ENCODE measurements at regions of chr2 and their contacts with region 1.

Region 1: DNA sequence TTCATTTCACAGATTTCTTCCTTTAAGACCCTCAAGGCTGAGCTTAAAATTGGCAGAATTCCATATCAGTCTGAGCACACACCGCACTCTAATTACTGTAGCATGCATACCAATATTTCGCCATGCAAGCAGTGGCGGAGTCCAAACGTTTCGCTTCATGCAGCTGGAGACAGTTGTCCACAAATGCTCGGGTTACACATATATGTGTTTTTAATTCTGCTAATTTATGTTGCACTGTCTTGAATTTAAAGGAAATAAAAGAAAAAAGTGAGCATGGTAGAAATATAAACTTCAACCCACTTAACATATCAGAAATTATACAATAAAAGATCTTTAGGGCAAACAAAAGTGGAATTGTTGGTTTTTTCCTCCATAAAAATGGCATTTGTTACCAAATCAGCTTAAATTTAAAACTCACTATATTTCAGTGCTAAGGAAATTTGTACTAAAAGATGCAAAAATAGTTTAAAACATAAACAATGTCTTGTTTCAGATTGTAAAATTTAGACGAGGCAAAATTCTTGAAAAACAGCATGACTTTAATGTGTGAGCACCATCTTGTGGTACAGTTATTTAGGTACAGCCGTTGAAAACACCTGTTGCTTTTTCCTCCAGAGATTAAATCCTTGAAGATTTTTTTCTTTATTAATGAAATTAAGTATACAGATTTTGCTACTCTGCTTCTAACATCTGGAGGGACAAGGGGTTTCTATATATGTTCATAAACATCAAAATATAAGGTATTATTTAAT is 24.1 kb upstream of the KANSL1L start:
- DNase-seq: peak in 1 of 2 donors; percentile 75
- ATAC-seq: peak in 2 of 3 donors; percentile 40 to 43
- H3K4me3 ChIP-seq: no peak overlapping the region
- H3K4me3 Mint-ChIP-seq: no peak overlapping the region
- H3K27ac ChIP-seq: no peak overlapping the region
- H3K27ac Mint-ChIP-seq: no peak overlapping the region
- H3K4me1 ChIP-seq: no peaks in the 10 kb centered on the region
- H3K4me1 Mint-ChIP-seq: no peaks in the 10 kb centered on the region
- H3K27me3 ChIP-seq: peaks cover 2% of the 10 kb centered on the region
- H3K27me3 Mint-ChIP-seq: peaks cover 0 to 1% of the 10 kb centered on the region in 2 donors
- CTCF ChIP-seq: peak; percentile 78

Region 2: GRCh38 chr2:208373460-208374089 is 1821.7 kb before region 1 on chr2:
- intact Hi-C with region 1: loop called (anchors 5 kb)
- DNase-seq: peak in 1 of 2 donors; percentile 49
- ATAC-seq: peak in 2 of 3 donors; percentile 40 to 59
- H3K4me3 ChIP-seq: no peak overlapping the region
- H3K4me3 Mint-ChIP-seq: no peak overlapping the region
- H3K27ac ChIP-seq: no peak overlapping the region
- H3K27ac Mint-ChIP-seq: no peak overlapping the region
- H3K4me1 ChIP-seq: no peaks in the 10 kb centered on the region
- H3K4me1 Mint-ChIP-seq: no peaks in the 10 kb centered on the region
- H3K27me3 ChIP-seq: no peaks in the 10 kb centered on the region
- H3K27me3 Mint-ChIP-seq: peaks cover 0 to 1% of the 10 kb centered on the region in 2 donors
- CTCF ChIP-seq: peak; percentile 87

Region 3: GRCh38 chr2:209977386-209978239 is 217.7 kb before region 1 on chr2:
- intact Hi-C with region 1: loop called (anchors 1 kb)
- DNase-seq: peak in 1 of 2 donors; percentile 73
- ATAC-seq: peak in 2 of 3 donors; percentile 52 to 53
- H3K4me3 ChIP-seq: no peak overlapping the region
- H3K4me3 Mint-ChIP-seq: no peak overlapping the region
- H3K27ac ChIP-seq: no peak overlapping the region
- H3K27ac Mint-ChIP-seq: no peak overlapping the region
- H3K4me1 ChIP-seq: no peaks in the 10 kb centered on the region
- H3K4me1 Mint-ChIP-seq: no peaks in the 10 kb centered on the region
- H3K27me3 ChIP-seq: no peaks in the 10 kb centered on the region
- H3K27me3 Mint-ChIP-seq: peaks cover 0 to 3% of the 10 kb centered on the region in 2 donors
- CTCF ChIP-seq: peak; percentile 89

Region 4: DNA sequence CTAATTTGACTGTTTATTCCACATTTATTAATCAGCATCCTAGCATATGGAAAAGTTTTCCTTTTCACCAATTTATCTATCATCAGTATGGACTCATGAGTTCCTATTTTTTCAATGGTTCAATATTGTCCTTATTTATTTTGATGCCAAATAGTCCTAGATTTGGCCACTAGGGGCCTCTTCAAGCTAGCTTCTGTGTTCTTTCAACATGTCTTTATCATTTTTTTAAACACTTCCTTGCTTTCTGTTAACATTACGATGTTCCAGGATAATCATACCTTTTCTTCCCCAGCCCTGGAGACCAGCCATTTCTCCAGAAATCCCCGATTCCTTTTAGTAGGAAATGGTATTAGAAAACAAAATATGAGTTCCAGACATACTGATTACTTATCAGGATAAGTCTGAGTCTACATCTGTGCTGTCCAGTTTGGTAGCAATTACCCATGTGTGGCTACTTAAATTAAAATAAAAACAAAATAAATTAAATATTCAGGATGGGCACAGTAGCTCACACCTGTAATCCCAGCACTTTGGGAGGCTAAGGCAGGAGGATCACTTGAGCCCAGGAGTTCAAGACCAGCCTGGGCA is 122.3 kb before region 1 on chr2:
- intact Hi-C with region 1: loop called (anchors 5 kb)
- DNase-seq: peak in 1 of 2 donors; percentile 21
- ATAC-seq: no peak
- H3K4me3 ChIP-seq: no peak overlapping the region
- H3K4me3 Mint-ChIP-seq: no peak overlapping the region
- H3K27ac ChIP-seq: no peak overlapping the region
- H3K27ac Mint-ChIP-seq: no peak overlapping the region
- H3K4me1 ChIP-seq: no peaks in the 10 kb centered on the region
- H3K4me1 Mint-ChIP-seq: peaks cover 5% of the 10 kb centered on the region in 2 donors
- H3K27me3 ChIP-seq: no peaks in the 10 kb centered on the region
- H3K27me3 Mint-ChIP-seq: no peaks in the 10 kb centered on the region
- CTCF ChIP-seq: peak; percentile 62

Region 5: GRCh38 chr2:210112871-210113270 is 82.4 kb before region 1 on chr2:
- intact Hi-C with region 1: no loop called
- DNase-seq: no peak
- ATAC-seq: no peak
- H3K4me3 ChIP-seq: no peak overlapping the region
- H3K4me3 Mint-ChIP-seq: no peak overlapping the region
- H3K27ac ChIP-seq: no peak overlapping the region
- H3K27ac Mint-ChIP-seq: no peak overlapping the region
- H3K4me1 ChIP-seq: no peaks in the 10 kb centered on the region
- H3K4me1 Mint-ChIP-seq: peaks cover 0 to 6% of the 10 kb centered on the region in 2 donors
- H3K27me3 ChIP-seq: no peaks in the 10 kb centered on the region
- H3K27me3 Mint-ChIP-seq: no peaks in the 10 kb centered on the region
- CTCF ChIP-seq: no peak